ENCODE measurements at regions of chr11 and their contacts with region 1.

Region 1: DNA sequence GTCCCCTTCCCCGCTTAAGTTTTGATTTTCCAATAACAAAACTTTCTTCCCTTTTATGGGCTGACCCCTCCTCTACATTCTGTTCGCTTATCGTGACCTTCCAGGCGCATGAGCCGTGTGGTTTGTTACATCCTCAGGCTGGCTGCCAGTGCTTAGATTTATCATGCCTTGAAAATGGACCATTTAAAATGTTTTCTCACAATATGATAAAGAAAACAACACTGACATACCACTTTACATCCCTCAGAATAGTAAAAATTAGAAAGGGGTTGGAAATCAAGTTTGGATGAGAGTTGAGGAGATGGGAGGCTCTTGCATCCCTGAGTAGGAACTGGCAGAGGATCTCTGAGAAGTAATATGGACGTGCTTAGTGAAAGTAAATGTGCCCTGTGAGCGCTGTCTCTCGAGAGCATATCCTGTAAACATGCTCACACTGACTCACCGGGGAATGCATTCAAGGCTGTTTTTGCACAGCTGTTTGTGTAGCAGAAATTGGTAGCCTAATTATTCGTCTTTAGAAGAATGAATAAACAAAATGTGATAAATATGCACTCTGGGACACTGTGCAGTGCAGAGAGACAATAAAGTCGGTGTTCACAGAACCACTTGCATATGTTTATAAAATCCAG is 17.1 kb upstream of the TOLLIP start:
- DNase-seq: no peak
- ATAC-seq: no peak
- H3K4me3 ChIP-seq: no peak overlapping the region
- H3K27ac ChIP-seq: no peak overlapping the region
- H3K4me1 ChIP-seq: peaks cover 0 to 4% (median 0%) of the 10 kb centered on the region in 9 donors
- H3K27me3 ChIP-seq: peaks cover 0 to 15% (median 2%) of the 10 kb centered on the region in 7 donors
- CTCF ChIP-seq: no peak

Region 2: DNA sequence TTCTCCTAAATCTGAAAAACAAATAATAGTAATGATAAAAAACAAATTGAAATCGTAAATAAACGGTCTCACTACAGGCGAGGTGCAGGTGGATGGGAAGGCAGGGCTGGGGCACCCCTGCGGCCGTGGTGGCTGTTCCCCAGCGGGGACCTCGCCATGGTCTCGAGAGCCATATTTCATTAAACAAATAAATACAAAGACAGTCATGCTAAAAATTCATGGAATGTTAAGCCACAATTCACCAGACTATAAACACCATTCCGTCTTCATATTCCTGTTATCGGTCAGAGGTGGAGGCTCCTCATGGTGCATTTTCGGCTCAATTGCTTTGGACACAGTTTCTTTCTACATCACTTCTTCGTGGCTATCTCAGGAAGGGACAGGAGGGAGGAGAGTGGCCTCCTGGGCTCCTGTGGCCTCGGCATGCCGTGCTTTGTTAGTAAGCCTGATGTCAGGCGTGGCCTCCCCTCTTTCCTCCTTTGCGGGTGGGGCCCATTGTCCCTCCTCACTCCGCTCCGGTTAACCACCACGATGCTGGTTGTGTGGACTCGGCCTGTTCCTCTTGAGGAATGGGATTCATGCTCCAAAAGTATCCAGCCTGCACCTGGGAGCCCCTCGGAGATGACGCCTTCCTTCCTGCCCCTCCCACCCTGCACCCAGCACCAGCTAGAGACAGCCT is 47.1 kb after region 1 on chr11:
- intact Hi-C with region 1: loop called in 1 of 10 experiments (anchors 10 kb)
- DNase-seq: no peak
- ATAC-seq: no peak
- H3K4me3 ChIP-seq: no peak overlapping the region
- H3K27ac ChIP-seq: no peak overlapping the region
- H3K4me1 ChIP-seq: no peaks in the 10 kb centered on the region
- H3K27me3 ChIP-seq: peaks cover 0 to 31% (median 4%) of the 10 kb centered on the region in 7 donors
- CTCF ChIP-seq: no peak

Measured in heart right ventricle (tissue), 16 donors.